ENCODE measurements at regions of chr10 and their contacts with region 1.

Region 1: GRCh38 chr10:59465088-59465487 is 102.7 kb upstream of the FAM13C start:
- DNase-seq: no peak
- ATAC-seq: no peak

Region 2: GRCh38 chr10:59079386-59080226 is 385.5 kb before region 1 on chr10:
- intact Hi-C with region 1: no loop called
- DNase-seq: no peak
- ATAC-seq: peak; percentile 80

Region 3: DNA sequence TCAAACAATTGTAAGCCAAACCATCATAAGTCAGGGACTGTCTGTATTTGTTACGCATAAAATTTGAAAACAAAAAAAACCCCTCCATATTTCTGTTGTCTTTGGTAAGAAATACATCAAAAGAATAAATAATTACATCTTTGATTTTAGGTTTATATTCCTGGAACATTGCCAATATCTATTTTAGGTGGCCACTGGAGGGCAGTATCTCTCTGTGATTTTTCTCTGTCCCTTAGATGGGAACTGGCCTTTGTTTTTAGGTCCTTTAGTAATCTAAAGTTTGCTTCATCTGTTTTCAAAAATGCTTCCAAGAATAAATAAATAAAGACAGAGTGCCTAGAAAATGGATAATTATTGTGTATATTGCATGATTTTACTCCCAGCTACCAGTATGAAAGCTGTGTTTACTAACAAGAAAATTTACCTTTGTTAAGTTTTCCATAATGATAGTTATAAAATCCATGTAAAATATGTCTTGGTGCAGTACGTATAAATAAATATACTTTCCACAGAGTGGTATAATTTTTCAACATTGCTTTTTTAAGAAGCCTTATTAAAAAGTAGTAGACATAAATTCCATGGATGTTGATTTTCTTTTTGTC is 224.4 kb before region 1 on chr10:
- intact Hi-C with region 1: loop called (anchors 5 kb)
- DNase-seq: no peak
- ATAC-seq: peak; percentile 38

Measured in Right ventricle myocardium superior (tissue), 1 donor.